Activated CD8-positive, alpha-beta T cell treated with anti-CD3 and anti-CD28 coated beads for 36 hours (primary cell): ENCODE measurements at regions of chr5 and their contacts with region 1.

Region 1: GRCh38 chr5:175657593-175658271 is at the start of gene HRH2:
- DNase-seq: peak; percentile 75
- ATAC-seq: peak; percentile 47
- H3K4me3 Mint-ChIP-seq: peak within 1 kb of the TSS; percentile 84
- H3K27ac Mint-ChIP-seq: peak within 1 kb of the TSS; percentile 84
- H3K4me1 Mint-ChIP-seq: peaks cover 72% of the 10 kb centered on the region
- H3K27me3 Mint-ChIP-seq: no peaks in the 10 kb centered on the region
- CTCF ChIP-seq: no peak
- total RNA-seq, gene HRH2: 23.2 to 24.5 TPM

Region 2: DNA sequence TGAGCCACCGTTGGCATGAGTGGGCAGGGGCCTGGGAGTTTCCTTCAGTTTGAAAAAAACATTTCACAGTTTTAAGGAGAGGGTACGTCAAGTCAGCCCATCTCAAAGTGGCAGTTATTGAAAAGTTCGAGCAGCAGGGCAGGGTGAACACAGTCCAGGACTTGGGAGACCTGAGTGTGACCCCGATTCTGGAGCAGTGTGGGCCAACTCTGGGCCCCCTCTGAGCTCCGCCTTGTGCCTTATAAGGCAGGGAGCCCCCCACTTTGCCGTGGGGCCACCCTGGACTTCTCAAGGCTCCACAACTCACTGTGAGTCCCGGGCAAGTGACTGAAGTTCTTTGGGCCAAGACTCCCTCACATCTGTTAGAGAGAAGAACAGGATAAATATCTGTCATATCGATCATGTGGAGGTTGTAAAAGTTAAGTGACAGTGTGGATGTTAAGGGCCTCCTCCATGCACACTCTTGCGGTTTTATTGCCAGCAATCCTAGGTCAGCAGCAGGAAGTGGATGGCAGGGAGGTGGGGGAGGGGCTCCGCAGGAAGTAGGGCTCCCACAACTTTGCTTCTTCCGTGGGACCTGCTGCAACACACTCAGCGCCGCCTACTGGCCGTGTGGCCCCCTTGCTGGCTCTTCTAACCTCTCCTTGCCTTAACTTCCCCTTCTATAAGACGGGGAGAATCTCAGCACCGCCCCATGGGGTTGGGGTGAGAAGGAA is 38.6 kb after region 1 on chr5:
- CTCF ChIA-PET with region 1: interaction called, 4 read pairs
- POLR2A ChIA-PET with region 1: interaction called, 3 read pairs
- intact Hi-C with region 1: loop called (anchors 5 kb)
- DNase-seq: peak; percentile 89
- ATAC-seq: peak; percentile 91
- H3K4me3 Mint-ChIP-seq: no peak overlapping the region
- H3K27ac Mint-ChIP-seq: peak overlapping the region; percentile 78
- H3K4me1 Mint-ChIP-seq: peaks cover 28% of the 10 kb centered on the region
- H3K27me3 Mint-ChIP-seq: no peaks in the 10 kb centered on the region
- CTCF ChIP-seq: peak; percentile 88

Region 3: DNA sequence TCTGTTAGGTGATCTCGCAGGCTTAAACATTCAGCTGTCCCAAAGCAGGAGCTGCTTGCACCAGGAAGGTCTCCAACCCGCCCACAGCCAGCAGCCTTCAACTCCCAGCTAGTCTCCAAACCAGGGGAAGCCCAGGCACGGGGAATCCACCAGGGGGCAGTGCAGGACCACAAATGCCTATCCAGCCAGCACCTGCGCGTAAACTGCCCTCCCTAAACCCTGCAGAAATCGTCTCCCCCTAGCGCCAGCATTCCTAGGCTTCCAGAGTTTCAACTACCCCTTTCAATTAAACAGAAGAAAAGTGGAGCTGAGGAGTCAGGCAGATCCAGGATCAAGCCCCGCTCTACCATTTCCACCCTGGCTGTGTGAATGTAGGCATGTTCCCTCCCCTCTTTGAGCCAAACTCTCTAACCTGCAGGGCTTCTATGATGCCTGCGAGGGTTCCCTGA is 72.1 kb after region 1 on chr5:
- CTCF ChIA-PET with region 1: no interaction called
- POLR2A ChIA-PET with region 1: no interaction called
- intact Hi-C with region 1: no loop called
- DNase-seq: peak; percentile 94
- ATAC-seq: peak; percentile 98
- H3K4me3 Mint-ChIP-seq: no peak overlapping the region
- H3K27ac Mint-ChIP-seq: no peak overlapping the region
- H3K4me1 Mint-ChIP-seq: peaks cover 5% of the 10 kb centered on the region
- H3K27me3 Mint-ChIP-seq: peaks cover 10% of the 10 kb centered on the region
- CTCF ChIP-seq: peak; percentile 93

Region 4: DNA sequence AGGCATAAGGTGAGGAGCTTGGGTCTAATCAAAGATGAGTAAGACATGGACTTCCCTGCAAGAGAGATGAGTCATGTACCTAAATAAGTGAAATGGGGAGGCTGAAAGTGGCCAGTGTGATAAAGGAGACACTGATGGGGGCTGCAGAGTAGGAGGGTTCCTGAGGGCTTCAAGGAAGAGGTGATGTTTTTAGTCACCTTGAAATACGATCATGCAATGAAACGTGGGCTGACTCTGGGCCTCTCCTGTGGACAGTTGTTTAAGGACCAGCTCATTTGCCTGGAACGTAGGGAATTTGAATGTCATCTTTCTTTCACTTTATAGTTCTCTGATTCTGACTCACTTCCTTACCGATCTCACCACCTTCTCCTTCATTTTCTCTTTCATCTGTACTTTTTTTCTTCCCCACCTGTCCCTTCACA is 164.1 kb after region 1 on chr5:
- CTCF ChIA-PET with region 1: no interaction called
- POLR2A ChIA-PET with region 1: no interaction called
- intact Hi-C with region 1: no loop called
- DNase-seq: peak; percentile 54
- ATAC-seq: peak; percentile 88
- H3K4me3 Mint-ChIP-seq: peak overlapping the region; percentile 25
- H3K27ac Mint-ChIP-seq: peak overlapping the region; percentile 81
- H3K4me1 Mint-ChIP-seq: peaks cover 18% of the 10 kb centered on the region
- H3K27me3 Mint-ChIP-seq: peaks cover 18% of the 10 kb centered on the region
- CTCF ChIP-seq: no peak

Region 5: GRCh38 chr5:175837171-175837699 is 179.5 kb after region 1 on chr5:
- CTCF ChIA-PET with region 1: no interaction called
- POLR2A ChIA-PET with region 1: no interaction called
- intact Hi-C with region 1: no loop called
- DNase-seq: no peak
- ATAC-seq: no peak
- H3K4me3 Mint-ChIP-seq: no peak overlapping the region
- H3K27ac Mint-ChIP-seq: no peak overlapping the region
- H3K4me1 Mint-ChIP-seq: no peaks in the 10 kb centered on the region
- H3K27me3 Mint-ChIP-seq: no peaks in the 10 kb centered on the region
- CTCF ChIP-seq: no peak